ENCODE measurements at regions of chr11 and their contacts with region 1.

Region 1: DNA sequence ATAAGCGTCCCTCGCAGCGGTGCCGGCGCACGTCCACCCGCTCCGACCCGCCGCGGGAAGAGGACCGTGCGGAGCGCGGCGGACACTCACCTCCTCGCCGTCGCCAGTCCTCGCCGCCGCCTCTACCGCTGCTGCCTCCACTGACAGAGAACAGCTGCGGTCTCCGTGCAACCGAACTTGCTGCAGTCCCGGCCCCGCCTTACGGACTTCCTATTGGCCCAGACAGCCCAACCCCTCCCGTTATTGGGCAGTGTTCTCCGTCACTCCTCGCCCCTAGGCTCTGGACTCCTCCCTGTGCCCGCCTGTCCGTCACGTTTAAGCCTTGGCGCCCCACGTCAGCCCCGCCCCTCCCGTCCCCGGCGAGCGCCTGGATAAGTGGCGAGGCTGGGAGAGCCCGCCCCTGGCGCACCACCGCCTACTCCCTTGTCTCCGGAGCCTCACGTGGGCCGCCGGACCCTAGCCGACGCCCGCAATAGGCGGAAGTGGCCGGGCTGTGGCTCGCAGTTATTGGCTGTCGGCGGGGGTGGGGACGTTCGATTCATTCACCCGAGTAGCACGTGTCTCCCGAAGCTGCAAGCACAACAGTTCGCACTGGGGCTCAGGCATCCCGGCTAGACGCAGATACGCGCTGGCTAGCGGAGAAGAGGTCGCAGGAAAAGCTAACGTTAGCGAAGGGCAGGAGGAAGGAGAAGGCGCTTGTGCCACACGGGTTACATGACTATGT is at the start of gene PC:
- DNase-seq: peak; percentile 99 to 100 (median 100)

Region 2: GRCh38 chr11:66344550-66345315 is 613.7 kb before region 1 on chr11 and contains the start of gene BRMS1:
- intact Hi-C with region 1: no loop called
- DNase-seq: peak; percentile 95 to 99 (median 98)

Region 3: DNA sequence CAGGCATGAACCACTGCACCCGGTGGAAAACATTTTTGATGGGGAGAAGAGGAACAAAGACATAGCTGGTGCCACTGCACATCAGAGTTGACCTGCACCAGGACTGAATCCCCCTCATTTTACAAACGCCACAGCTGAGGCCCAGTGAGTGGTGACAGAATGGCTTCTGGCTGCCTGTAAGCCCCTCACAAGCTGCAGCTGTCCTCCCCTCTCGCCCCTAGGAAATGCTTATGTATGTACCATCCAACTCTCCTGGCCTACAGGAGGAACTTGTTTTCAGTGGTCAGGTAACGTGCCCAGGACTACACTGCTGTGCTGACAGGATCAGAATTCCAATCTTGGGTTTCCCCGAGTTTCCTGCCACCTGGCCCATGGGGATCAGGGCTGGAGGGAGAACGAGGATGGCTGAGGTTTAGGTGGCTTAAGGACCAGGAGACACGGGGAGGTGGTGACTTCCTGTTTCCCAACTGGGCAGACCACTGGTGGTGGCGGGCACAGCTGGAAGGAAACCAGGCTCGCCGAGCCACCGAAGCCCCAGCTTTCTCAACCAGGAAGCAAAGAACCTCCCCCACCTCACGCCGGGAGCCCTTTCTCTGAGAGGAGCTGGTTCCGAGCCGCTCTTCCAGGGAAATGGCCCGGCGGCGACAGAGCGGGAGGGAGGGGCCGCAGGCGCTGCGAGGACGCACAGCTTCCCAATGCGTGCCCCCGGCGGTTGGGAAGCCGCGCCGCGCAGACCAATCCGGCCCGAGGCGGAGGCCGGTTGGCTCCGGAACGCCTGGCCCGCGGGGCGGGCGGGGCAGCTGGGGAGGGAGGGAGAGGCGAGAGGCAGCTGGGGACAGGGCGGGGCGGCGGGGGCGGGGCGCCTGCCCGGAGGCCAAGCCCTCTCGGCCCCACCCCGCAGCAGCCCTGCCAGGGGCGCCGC is 102.6 kb before region 1 on chr11:
- intact Hi-C with region 1: loop called (anchors 1 kb)
- DNase-seq: peak; percentile 77 to 99 (median 94)

Region 4: DNA sequence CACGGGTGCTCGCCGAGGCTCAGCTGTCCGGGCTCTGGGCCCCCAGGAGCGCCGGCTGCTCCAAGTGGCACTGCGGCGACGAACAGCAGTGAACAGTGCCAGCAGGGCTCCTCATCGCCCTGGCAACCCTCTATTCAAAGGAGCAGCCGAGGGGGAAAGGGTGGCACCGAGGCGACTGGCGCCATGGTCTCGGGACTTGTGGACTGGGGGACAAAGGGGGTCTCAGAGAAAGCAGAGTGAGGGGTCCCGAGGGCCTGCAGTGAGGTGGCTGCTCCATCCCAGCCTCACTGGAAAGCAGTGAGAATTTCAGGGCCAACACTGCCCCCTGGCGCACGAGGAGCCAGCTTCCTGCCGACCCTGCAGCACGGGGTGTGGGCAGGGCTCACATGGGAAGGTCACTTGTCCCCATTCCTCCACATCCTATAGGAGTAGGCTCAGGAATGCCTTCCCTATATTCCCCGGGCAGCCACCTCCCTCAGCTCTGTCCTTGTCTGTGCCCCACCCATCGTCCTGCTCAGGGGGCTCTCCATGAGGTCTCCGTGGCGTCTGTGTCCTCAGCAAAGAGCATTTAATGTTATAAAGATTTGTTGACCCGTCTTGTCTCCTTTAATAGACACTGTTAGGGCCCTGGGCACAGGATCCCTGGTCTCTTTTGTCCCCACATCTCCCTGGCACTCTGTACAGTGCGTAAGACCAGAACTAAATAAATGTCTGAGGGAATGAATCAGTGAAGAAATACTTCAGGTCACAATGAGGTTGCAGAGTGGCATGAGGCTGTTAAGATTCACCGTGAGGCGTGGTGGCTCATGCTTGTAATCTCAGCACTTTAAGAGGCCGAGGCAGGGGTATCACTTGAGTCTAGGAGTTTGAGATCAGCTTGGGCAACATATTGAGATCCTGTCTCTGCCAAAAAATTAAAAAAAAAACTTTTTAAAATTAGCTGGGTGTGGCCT is 75.1 kb before region 1 on chr11:
- intact Hi-C with region 1: loop called (anchors 10 kb)
- DNase-seq: peak; percentile 73 to 97 (median 89)

Region 5: DNA sequence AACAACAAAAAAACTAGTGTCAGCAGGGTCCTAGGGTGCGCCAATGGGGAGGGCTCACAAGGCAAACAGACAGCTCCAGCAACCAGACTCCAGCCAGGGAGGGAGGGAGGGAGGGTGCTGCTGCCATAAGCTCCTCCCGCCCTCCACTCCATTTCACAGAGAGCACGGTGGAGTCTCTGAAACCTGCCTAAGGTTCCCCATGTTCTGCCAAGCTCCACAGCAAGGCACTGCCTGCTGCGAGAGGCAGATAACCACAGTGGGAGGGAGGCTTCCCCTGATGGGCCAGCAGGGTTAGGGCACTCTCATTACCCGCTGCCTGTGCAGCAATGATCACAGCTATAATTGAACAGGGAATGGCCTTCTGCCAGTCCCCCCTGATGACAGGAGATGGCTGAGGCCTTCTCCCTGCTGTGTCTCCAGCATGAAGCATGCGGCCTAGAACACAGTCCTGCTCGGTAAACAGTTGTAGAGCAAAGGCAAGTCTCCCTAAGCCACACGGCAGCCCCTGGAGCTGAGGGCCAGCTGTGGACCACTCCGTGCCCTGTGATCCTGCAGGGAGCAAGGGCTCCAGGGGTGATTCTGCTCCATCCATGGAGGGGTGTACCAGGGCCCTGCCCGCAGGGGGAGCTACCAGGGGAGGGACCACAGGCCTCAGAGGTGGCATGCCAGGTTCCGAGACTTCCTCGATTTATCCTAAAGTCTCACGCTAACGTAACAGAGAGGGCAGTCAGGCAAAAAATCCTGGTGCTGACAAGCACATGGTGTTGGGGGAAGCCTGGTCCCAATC is 43.2 kb before region 1 on chr11:
- intact Hi-C with region 1: loop called (anchors 5 kb)
- DNase-seq: peak in 2 of 10 donors; percentile 37 to 85